H1 (cell line): ENCODE measurements at regions of chr4 and their contacts with region 1.

Region 1: GRCh38 chr4:122577808-122578781 is 42.8 kb downstream of the IL21 start:
- DNase-seq: peak in 1 of 2 experiments; percentile 64
- H3K4me3 ChIP-seq: no peak overlapping the region
- H3K27ac ChIP-seq: no peak overlapping the region
- H3K4me1 ChIP-seq: no peaks in the 10 kb centered on the region
- H3K27me3 ChIP-seq: no peaks in the 10 kb centered on the region
- CTCF ChIP-seq: peak in 2 of 3 experiments; percentile 69 to 78; a peak in 3 of 4 replicates
- EP300 ChIP-seq: no peak
- POLR2A ChIP-seq: no peak
- RAD21 ChIP-seq: peak; percentile 55 to 69

Region 2: DNA sequence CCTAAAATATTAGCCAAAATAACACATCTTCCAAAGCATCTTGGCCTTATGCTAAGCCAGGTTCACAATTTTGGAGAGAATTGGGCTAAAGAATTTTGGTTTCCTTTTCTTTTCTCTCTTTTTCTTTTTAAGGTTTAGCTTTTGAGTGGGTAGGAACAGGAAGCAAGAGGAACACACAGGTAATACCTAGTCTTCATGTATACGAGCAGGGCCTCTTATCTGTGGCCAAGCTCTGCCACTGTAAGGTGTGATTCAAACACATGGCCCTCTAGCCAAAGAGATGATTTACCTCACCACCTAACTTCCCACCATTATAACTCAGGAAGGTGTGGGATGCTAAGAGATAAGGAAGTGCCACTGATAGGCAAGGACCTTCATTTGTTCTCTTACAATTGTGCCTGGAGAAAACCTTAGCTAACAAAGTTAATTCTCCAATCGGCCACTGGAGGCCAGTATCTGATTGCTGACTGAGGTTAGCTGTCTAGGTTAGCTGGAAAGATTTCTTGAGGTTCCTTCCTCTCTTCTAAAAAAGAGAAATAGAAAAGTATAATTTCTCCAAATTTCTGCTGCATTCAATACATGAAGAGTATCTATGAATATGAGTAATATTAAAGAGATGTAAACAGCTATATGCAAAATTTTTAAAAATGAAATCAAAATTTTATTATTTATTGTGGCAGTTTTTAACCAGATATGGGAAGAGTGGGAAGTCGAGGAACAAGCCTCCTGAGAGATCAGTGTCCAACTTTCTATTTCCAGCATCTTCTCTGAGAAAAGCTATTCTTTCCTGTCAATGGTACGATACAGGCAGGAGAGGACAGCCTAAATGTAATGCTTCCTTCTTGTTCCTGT is 677.7 kb before region 1 on chr4:
- CTCF ChIA-PET with region 1: interaction called, 37 read pairs
- POLR2A ChIA-PET with region 1: no interaction called
- DNase-seq: peak; percentile 10 to 56
- H3K4me3 ChIP-seq: no peak overlapping the region
- H3K27ac ChIP-seq: no peak overlapping the region
- H3K4me1 ChIP-seq: no peaks in the 10 kb centered on the region
- H3K27me3 ChIP-seq: no peaks in the 10 kb centered on the region
- CTCF ChIP-seq: peak in 2 of 3 experiments; percentile 79 to 82; a peak in 3 of 4 replicates
- EP300 ChIP-seq: no peak
- POLR2A ChIP-seq: no peak
- RAD21 ChIP-seq: peak; percentile 95 to 96

Region 3: GRCh38 chr4:122346036-122346435 is 232.1 kb before region 1 on chr4:
- CTCF ChIA-PET with region 1: interaction called, 10 read pairs
- POLR2A ChIA-PET with region 1: no interaction called
- DNase-seq: no peak
- H3K4me3 ChIP-seq: no peak overlapping the region
- H3K27ac ChIP-seq: no peak overlapping the region
- H3K4me1 ChIP-seq: no peaks in the 10 kb centered on the region
- H3K27me3 ChIP-seq: no peaks in the 10 kb centered on the region
- CTCF ChIP-seq: no peak
- EP300 ChIP-seq: no peak
- POLR2A ChIP-seq: no peak
- RAD21 ChIP-seq: no peak

Region 4: DNA sequence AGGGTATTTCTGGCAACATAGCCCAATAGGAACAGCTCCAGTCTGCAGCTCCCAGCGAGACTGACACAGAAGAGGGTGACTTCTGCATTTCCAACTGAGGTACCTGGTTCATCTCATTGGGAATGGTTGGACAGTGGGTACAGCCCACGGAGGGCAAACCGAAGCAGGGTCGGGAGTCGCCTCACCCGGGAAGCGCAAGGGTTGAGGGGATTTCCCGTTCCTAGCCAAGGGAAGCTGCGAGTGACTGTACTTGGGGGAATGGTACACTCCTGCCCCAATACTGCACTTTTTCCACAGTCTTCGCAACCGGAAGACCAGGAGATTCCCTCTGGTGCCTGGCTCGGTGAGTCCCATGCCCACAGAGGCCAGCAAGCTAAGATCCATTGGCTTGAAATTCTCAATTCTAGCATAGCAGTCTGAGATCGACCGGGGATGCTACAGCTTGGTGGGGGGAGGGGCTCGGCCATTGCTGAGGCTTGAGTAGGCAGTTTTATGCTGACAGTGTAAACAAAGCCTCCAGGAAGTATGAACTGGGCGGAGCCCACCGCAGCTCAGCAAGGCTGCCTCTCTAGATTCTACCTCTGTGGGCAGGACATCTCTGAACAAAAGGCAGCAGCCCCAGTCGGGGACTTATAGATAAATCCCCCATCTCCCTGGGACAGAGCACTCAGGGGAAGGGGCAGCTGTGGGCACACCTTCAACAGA is 213.2 kb before region 1 on chr4:
- CTCF ChIA-PET with region 1: interaction called, 14 read pairs
- POLR2A ChIA-PET with region 1: no interaction called
- DNase-seq: peak in 1 of 2 experiments; percentile 47
- H3K4me3 ChIP-seq: no peak overlapping the region
- H3K27ac ChIP-seq: no peak overlapping the region
- H3K4me1 ChIP-seq: peaks cover 0 to 4% (median under 1%) of the 10 kb centered on the region in 4 experiments; a peak in 1 of 7 replicates
- H3K27me3 ChIP-seq: no peaks in the 10 kb centered on the region
- CTCF ChIP-seq: no peak
- EP300 ChIP-seq: no peak
- POLR2A ChIP-seq: no peak
- RAD21 ChIP-seq: no peak

Region 5: GRCh38 chr4:122508083-122508482 is 70.0 kb before region 1 on chr4:
- CTCF ChIA-PET with region 1: no interaction called
- POLR2A ChIA-PET with region 1: no interaction called
- DNase-seq: no peak
- H3K4me3 ChIP-seq: no peak overlapping the region
- H3K27ac ChIP-seq: no peak overlapping the region
- H3K4me1 ChIP-seq: no peaks in the 10 kb centered on the region
- H3K27me3 ChIP-seq: no peaks in the 10 kb centered on the region
- CTCF ChIP-seq: no peak
- EP300 ChIP-seq: no peak
- POLR2A ChIP-seq: no peak
- RAD21 ChIP-seq: no peak

Region 6: GRCh38 chr4:122542411-122543236 is 35.5 kb before region 1 on chr4:
- CTCF ChIA-PET with region 1: interaction called, 16 read pairs
- POLR2A ChIA-PET with region 1: no interaction called
- DNase-seq: no peak
- H3K4me3 ChIP-seq: no peak overlapping the region
- H3K27ac ChIP-seq: no peak overlapping the region
- H3K4me1 ChIP-seq: no peaks in the 10 kb centered on the region
- H3K27me3 ChIP-seq: no peaks in the 10 kb centered on the region
- CTCF ChIP-seq: no peak
- EP300 ChIP-seq: no peak
- POLR2A ChIP-seq: no peak
- RAD21 ChIP-seq: no peak

Region 7: DNA sequence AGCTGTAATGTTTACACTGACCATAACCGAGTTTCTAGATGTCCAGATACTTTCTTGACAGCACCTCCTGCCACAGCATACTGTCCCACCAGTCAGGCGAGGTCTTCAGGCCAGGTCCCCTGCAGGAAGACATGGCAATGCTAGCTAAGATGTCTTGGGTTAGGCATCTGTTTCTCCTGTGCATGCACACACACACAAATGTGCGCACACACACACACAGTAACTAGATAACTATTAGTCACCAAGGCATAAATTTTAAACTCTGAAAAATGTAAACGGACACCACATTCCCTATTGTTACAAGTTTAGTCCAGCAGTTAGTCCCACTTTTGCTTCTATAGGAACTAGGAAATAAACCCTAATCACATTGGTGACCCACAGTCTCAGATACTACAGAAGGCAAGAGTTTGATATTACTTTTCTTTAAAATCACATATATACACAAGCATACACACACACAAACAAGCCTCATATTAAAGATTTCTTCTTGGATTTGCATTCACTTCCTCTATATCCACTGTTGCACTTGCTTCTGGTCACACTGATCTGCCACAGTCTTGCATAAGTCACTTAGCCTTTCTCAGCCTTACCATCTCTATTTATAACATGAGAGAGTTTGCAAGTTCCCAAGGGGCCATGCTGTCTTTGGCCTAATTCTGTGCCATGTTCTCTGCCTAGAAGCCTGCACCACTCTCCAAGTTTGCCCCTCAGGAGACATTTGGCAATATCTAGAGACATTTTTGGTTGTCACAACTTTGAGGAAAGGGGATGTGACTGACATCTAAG is 10.6 kb after region 1 on chr4:
- CTCF ChIA-PET with region 1: interaction called, 26 read pairs
- POLR2A ChIA-PET with region 1: no interaction called
- DNase-seq: no peak
- H3K4me3 ChIP-seq: no peak overlapping the region
- H3K27ac ChIP-seq: no peak overlapping the region
- H3K4me1 ChIP-seq: no peaks in the 10 kb centered on the region
- H3K27me3 ChIP-seq: no peaks in the 10 kb centered on the region
- CTCF ChIP-seq: no peak
- EP300 ChIP-seq: no peak
- POLR2A ChIP-seq: no peak
- RAD21 ChIP-seq: no peak

Region 8: GRCh38 chr4:122612540-122612939 is 34.4 kb after region 1 on chr4:
- CTCF ChIA-PET with region 1: interaction called, 12 read pairs
- POLR2A ChIA-PET with region 1: no interaction called
- DNase-seq: no peak
- H3K4me3 ChIP-seq: no peak overlapping the region
- H3K27ac ChIP-seq: no peak overlapping the region
- H3K4me1 ChIP-seq: peaks cover 0 to 2% (median under 1%) of the 10 kb centered on the region in 4 experiments; a peak in 1 of 7 replicates
- H3K27me3 ChIP-seq: no peaks in the 10 kb centered on the region
- CTCF ChIP-seq: no peak
- EP300 ChIP-seq: no peak
- POLR2A ChIP-seq: no peak
- RAD21 ChIP-seq: no peak